Activated CD4-positive, alpha-beta T cell treated with anti-CD3 and anti-CD28 coated beads, Interleukin-2, amount 10 ng/mL, durations not matched to agents 24 days and 14 days (primary cell): ENCODE measurements at regions of chr6 and their contacts with region 1.

Region 1: GRCh38 chr6:31806465-31807272 is at the start of gene LSM2:
- DNase-seq: peak; percentile 99
- H3K4me3 Mint-ChIP-seq: peak within 1 kb of the TSS; percentile 91
- H3K27ac Mint-ChIP-seq: peak within 1 kb of the TSS; percentile 94
- H3K4me1 Mint-ChIP-seq: peaks cover 21% of the 10 kb centered on the region
- H3K27me3 Mint-ChIP-seq: no peaks in the 10 kb centered on the region
- total RNA-seq, gene LSM2: 142 and 146 TPM in 2 replicates

Region 2: GRCh38 chr6:31827286-31828079 is 20.8 kb after region 1 on chr6 and contains the start of gene HSPA1B:
- intact Hi-C with region 1: loop called (anchors 2 kb)
- DNase-seq: peak; percentile 98
- H3K4me3 Mint-ChIP-seq: peak within 1 kb of the TSS; percentile 87
- H3K27ac Mint-ChIP-seq: peak within 1 kb of the TSS; percentile 93
- H3K4me1 Mint-ChIP-seq: peaks cover 37% of the 10 kb centered on the region
- H3K27me3 Mint-ChIP-seq: no peaks in the 10 kb centered on the region
- total RNA-seq, gene HSPA1B: 156 and 161 TPM in 2 replicates

Region 3: GRCh38 chr6:32327103-32327502 is 520.4 kb after region 1 on chr6:
- intact Hi-C with region 1: no loop called
- DNase-seq: no peak
- H3K4me3 Mint-ChIP-seq: no peak overlapping the region
- H3K27ac Mint-ChIP-seq: no peak overlapping the region
- H3K4me1 Mint-ChIP-seq: peaks cover 4% of the 10 kb centered on the region
- H3K27me3 Mint-ChIP-seq: peaks cover 23% of the 10 kb centered on the region